ENCODE measurements at regions of chr6 and their contacts with region 1.

Region 1: GRCh38 chr6:26270903-26271667 is 93.9 kb upstream of the BTN3A2 start:
- DNase-seq: peak; percentile 98
- H3K4me3 ChIP-seq: peak overlapping the region; percentile 87
- H3K27ac ChIP-seq: peak overlapping the region; percentile 99
- H3K4me1 ChIP-seq: peaks cover 42% of the 10 kb centered on the region
- CTCF ChIP-seq: no peak; the same call in 1 of the 2 replicates

Region 2: DNA sequence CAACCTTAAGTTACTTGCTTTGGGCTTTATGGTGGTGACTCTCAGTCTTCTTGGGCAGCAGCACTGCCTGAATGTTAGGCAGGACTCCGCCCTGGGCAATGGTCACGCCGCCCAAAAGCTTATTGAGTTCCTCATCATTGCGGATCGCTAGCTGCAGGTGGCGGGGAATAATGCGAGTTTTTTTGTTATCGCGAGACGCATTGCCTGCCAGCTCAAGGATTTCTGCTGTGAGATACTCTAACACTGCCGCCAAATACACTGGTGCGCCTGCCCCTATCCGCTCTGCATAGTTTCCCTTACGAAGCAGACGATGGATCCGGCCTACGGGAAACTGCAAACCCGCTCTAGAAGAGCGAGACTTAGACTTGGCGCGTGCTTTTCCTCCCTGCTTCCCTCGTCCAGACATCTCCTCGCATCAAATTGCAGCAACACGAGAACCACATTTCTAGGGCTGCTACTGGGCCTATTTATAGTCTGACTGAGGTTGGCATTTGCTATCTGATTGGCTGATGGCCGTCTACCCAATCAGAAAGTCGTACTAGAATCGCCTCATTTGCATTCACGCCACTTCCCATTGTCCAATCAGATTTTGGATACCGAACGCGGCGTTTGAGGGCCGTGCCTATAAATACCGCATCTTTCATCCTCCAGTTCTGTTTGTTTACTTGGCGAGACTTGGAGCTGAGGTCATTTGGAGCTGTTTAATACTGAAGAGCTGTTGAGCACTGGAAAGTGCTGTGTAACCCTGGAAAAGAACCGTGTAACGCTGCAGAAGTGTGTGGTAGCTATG is 544.8 kb before region 1 on chr6:
- CTCF ChIA-PET with region 1: no interaction called
- POLR2A ChIA-PET with region 1: no interaction called
- intact Hi-C with region 1: no loop called
- DNase-seq: no peak
- H3K4me3 ChIP-seq: no peak overlapping the region
- H3K27ac ChIP-seq: no peak overlapping the region
- H3K4me1 ChIP-seq: no peaks in the 10 kb centered on the region
- CTCF ChIP-seq: no peak

Region 3: DNA sequence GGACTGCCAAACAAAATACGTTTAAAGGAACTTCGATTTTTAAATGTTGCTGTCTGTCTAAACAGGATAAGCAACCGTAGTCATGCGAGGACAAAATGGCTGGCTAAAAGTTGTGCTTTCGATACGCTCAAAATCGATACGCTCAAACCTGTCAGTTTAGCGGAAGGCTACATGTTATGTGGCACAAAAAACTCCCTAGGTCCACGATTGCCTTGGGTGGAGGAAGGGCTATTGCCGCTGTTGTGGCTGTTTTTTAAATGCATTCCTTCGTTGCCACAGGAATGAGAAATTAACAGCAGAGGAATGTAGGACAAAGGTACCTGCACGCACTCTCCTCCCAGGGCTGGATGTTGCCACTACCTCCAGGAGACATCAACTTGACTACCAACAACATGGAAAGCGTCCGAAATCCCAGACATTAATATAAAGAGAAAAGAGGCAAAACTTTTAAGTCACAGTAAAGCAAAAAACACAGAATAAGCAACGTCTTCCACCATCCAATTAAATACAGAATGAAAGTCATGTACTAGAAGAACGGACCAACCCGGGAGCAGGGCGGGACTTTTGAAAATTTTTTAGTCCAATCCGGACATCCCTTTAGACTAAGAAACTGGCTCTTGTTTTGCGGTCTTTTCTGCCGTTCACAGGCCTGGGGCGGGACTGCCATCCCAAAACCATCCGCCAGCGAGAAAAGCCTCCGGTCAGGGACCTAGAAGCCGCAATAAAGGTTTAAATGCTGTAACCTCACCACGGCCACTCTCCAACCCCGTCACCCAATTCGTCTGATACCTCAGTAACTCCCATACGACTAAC is 216.0 kb before region 1 on chr6:
- CTCF ChIA-PET with region 1: no interaction called
- POLR2A ChIA-PET with region 1: interaction called, 6 read pairs
- intact Hi-C with region 1: loop called (anchors 5 kb)
- DNase-seq: peak; percentile 93
- H3K4me3 ChIP-seq: peak overlapping the region; percentile 70
- H3K27ac ChIP-seq: peak overlapping the region; percentile 93
- H3K4me1 ChIP-seq: peaks cover 41% of the 10 kb centered on the region
- CTCF ChIP-seq: no peak

Region 4: DNA sequence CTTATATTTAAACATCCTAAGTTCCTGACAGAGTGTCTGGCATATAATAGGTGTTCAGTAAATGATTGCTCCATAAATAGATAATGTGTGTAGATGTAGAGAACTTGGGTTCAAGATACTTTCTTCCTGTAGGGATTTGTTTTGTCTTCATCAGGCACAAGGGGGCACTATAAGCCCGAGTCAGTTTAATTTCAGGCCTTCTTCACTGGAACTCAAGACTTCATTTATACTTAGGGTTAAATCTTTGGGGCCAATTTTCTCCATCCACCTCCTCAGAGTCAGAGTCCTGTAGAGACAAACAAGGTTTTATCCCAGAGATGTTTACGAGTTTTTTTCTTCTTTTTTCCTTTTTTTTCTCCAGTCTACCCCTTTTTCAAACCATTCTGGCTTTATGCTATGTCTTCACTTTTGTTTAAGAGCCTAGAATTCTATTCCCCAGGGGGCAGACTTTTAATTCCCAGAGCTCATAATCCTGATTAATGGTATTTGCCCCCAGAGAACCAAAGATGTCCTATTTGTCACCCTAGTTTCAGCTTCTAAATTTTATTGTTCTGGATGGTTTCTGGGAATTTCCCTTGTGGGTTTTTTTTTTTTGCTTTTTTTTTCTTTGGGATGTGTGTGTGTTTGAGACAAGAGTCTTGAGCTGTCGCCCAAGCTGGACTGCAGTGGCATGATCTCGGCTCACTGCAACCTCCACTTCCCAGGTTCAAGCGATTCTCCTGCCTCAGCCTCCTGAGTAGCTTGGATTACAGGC is 95.5 kb before region 1 on chr6:
- CTCF ChIA-PET with region 1: no interaction called
- POLR2A ChIA-PET with region 1: interaction called, 27 read pairs
- intact Hi-C with region 1: loop called (anchors 1 kb)
- DNase-seq: peak; percentile 79
- H3K4me3 ChIP-seq: peak overlapping the region; percentile 74
- H3K27ac ChIP-seq: peak overlapping the region; percentile 94
- H3K4me1 ChIP-seq: peaks cover 30% of the 10 kb centered on the region
- CTCF ChIP-seq: peak; percentile 95

Region 5: DNA sequence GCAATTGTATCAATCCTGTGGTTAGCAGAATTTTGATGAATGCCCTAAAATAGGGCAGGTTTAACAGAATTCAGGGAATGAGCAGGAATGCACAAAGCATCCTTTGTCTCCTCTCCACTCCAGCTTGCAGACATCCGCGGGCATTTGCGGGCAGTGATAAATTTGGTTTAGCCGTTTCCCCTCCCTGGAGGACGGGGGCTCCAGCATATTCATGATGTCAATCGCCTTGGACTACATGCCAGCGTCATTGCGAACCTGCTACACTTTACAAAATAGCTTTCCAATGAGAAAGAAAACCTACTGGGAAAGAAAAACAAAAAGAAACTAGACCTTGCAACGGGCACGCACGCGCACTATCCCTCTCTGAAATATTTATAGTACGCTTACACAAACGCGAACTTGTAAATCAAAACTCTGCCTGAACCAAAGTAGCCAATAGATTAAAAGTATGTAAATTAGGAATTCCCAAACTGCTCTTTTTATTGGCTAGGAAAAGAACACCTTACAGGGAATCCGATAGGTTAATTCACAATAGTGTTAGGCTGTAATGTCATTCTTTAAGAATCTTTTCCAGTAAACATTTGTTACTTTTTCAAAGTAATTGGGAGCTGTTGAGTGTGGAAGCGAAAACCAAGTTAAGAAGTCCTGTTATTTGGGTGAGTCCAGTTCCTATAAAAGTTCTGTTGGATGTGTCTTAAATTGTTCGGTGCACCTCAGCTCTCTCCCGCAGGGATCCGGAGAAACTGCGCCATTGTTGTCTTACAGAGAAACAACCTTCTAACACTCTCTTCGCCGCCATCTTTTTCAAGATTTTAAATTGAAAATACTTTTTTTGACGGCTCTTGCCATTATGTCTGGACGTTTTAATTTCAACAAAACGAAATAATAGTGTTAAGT is 47.2 kb before region 1 on chr6:
- CTCF ChIA-PET with region 1: interaction called, 4 read pairs
- POLR2A ChIA-PET with region 1: interaction called, 28 read pairs
- intact Hi-C with region 1: no loop called
- DNase-seq: no peak
- H3K4me3 ChIP-seq: peak overlapping the region; percentile 59
- H3K27ac ChIP-seq: peak overlapping the region; percentile 60
- H3K4me1 ChIP-seq: peaks cover 60% of the 10 kb centered on the region
- CTCF ChIP-seq: no peak

Region 6: DNA sequence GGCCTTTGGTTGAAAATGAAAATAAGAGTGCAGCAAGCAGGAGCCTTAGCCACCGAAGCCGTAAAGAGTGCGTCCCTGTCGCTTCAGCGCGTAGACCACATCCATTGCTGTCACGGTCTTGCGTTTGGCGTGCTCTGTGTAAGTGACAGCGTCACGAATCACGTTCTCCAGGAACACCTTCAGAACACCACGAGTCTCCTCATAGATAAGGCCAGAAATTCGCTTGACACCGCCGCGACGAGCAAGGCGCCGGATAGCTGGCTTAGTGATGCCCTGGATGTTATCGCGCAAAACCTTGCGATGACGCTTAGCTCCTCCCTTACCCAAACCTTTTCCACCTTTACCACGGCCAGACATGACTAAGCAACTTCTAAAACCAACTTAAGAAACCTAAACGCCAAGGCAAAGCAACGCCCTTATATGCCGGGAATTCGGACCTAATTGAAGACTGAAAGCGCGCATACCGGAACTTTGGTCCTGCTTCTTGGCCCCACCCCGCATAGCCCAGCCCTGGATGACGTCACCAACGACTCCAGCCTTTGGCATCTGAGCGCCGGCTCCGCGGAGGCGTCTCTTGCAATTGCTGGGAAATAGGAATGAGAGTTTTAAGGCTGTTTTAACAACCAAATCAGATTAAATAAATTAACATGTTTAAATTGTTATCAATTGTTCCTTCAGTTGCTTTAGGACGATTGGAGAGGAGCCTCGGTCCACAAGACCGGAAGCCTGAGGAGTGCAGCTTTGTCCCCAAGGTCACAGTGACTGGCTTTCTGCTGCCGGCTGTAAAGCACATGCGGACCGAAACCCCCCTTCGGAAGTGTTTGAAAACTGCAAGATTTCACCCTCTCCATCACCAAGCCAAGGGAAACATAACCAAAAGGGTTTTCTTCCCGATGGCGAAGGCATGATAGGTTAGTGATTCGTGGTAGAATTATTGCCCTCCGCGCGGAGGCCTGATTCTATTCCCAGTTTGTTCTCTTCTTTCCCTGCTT is 14.4 kb after region 1 on chr6:
- CTCF ChIA-PET with region 1: no interaction called
- POLR2A ChIA-PET with region 1: interaction called, 269 read pairs
- intact Hi-C with region 1: loop called (anchors 1 kb)
- DNase-seq: peak; percentile 99
- H3K4me3 ChIP-seq: peak overlapping the region; percentile 80
- H3K27ac ChIP-seq: peak overlapping the region; percentile 96
- H3K4me1 ChIP-seq: peaks cover 32% of the 10 kb centered on the region
- CTCF ChIP-seq: 0 out of 2 replicates have a peak, but pooled peaks have one; percentile 0

Region 7: DNA sequence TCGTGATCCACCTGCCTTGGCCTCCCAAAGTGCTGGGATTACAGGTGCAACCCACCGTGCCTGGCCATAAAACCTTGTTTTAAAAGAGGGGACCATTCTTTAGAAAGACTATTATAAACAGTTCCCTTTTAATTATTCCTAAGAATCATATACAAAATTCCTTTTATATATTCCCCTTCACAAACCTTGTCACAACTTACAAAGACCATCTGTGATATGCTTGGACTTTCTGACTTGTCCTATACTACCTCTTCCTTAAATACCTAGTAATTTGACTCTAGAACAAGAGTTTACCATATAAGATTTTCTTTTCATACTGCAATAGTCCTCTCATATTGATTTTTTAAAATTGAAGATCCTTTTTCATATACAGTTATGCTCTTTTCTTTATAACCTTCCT is 840.7 kb after region 1 on chr6:
- CTCF ChIA-PET with region 1: no interaction called
- POLR2A ChIA-PET with region 1: no interaction called
- intact Hi-C with region 1: no loop called
- DNase-seq: peak; percentile 21
- H3K4me3 ChIP-seq: no peak overlapping the region
- H3K27ac ChIP-seq: no peak overlapping the region
- H3K4me1 ChIP-seq: no peaks in the 10 kb centered on the region
- CTCF ChIP-seq: no peak

Region 8: GRCh38 chr6:27809939-27810767 is 1539.1 kb after region 1 on chr6:
- CTCF ChIA-PET with region 1: no interaction called
- POLR2A ChIA-PET with region 1: interaction called, 9 read pairs
- intact Hi-C with region 1: loop called (anchors 5 kb)
- DNase-seq: peak; percentile 96
- H3K4me3 ChIP-seq: peak overlapping the region; percentile 82
- H3K27ac ChIP-seq: peak overlapping the region; percentile 96
- H3K4me1 ChIP-seq: peaks cover 62% of the 10 kb centered on the region
- CTCF ChIP-seq: peak; percentile 12; the same call in 1 of the 2 replicates

Region 9: DNA sequence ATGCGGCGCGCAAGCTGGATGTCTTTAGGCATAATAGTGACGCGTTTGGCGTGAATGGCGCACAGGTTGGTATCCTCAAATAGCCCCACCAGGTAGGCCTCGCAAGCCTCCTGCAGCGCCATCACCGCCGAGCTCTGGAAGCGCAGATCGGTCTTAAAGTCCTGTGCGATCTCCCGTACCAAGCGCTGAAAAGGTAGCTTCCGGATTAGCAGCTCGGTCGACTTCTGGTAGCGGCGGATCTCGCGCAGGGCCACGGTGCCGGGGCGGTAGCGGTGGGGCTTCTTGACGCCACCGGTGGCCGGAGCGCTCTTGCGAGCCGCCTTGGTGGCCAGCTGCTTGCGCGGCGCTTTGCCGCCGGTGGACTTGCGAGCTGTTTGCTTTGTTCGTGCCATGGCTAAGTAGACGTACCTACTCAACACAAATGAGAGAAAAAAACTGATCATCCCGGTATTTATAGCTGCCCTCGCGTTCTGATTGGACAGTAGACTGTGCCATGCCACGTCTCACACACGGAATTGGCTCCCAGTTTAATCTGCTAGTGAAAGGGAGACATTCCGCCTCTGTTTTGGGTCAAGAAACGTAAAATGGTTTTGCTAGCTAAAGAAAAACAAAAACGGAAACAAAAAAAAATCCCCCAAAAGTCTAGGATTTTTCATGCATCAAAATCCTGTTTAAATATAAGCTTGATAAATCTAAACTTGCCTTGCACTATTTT is 1601.0 kb after region 1 on chr6:
- CTCF ChIA-PET with region 1: no interaction called
- POLR2A ChIA-PET with region 1: interaction called, 14 read pairs
- intact Hi-C with region 1: loop called (anchors 2 kb)
- DNase-seq: peak; percentile 95
- H3K4me3 ChIP-seq: peak overlapping the region; percentile 69
- H3K27ac ChIP-seq: peak overlapping the region; percentile 99
- H3K4me1 ChIP-seq: peaks cover 71% of the 10 kb centered on the region
- CTCF ChIP-seq: peak; percentile 44